CD8-positive, alpha-beta T cell (primary cell): ENCODE measurements at regions of chr22 and their contacts with region 1.

Region 1: DNA sequence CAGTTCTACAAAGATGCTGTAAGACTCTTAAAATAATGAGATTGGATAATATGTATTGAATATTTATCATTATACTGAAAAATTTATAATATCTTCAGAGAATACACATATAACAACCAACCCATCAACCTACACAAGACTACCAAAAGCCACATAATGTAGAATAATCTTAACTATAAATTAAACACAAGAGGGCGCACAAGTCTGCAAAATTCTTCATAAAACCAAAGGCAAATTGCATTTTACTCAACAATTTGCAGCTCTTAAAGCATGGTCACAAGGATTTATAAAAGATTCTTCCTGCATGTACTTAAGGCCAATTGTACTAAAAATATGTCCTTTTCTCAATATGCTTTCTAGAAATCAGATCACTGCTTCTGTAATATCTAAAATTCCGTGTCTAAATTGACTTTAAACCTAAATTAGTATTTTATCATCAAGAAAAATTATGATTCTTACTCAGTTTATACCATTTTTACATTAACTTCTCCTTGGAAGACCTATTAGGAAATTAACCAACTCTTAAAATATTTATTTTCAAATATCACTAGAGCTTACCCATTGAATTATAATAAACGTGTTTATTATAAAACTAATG is 79.0 kb downstream of the TTC28 start:
- DNase-seq: peak in 3 of 9 experiments; percentile 14 to 69 (median 58)
- ATAC-seq: peak; percentile 38
- H3K4me3 ChIP-seq: no peak overlapping the region
- H3K4me3 Mint-ChIP-seq: no peak overlapping the region
- H3K27ac ChIP-seq: no peak overlapping the region
- H3K27ac Mint-ChIP-seq: no peak overlapping the region
- H3K4me1 ChIP-seq: no peaks in the 10 kb centered on the region
- H3K4me1 Mint-ChIP-seq: no peaks in the 10 kb centered on the region
- H3K27me3 ChIP-seq: peaks cover 0 to 2% of the 10 kb centered on the region in 2 experiments
- H3K27me3 Mint-ChIP-seq: peaks cover 24% of the 10 kb centered on the region
- CTCF ChIP-seq: peak; percentile 58

Region 2: DNA sequence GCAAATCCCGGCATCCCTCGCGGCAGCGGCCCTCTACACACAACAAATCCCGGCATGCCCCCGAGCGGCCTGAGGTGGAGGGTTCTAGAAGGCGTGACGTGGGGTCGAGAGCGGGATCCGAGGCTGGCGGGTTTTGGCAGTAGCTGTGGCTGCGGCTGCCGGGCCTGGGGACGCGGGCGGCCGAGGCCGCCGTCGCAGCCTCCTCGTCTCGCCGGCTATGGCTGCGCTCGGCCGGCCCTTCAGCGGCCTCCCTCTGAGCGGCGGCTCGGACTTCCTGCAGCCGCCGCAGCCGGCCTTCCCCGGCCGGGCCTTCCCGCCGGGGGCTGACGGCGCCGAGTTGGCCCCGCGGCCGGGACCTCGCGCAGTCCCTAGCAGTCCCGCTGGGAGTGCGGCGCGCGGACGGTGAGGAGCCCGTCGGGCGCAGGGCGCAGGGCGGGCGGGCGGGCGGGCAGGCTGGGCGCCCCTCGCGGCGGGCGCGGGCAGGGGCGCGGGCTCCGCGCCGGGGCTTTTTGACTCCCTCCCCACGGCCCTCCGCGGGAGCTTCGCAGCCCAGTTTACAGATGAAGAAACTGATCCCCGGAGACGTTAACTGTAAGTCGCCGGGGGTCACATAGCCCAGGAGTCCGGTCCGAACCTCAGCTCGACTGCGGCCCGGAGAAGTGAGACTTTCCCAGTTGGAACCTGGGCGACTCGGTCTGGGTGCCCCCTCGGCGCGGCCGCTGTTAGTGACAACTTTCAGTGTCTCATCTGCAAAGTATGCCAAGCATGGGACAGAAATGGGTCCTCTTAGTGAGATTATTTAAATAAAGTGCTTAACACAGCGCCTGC is 172.2 kb after region 1 on chr22 and contains the start of gene CCDC117:
- CTCF ChIA-PET with region 1: interaction called, 11 read pairs
- POLR2A ChIA-PET with region 1: no interaction called
- intact Hi-C with region 1: loop called in 1 of 2 experiments (anchors 1 kb)
- DNase-seq: peak; percentile 85 to 96 (median 94)
- ATAC-seq: peak; percentile 94
- H3K4me3 ChIP-seq: peak within 1 kb of the TSS; percentile 60 to 65
- H3K4me3 Mint-ChIP-seq: peak within 1 kb of the TSS; percentile 94
- H3K27ac ChIP-seq: peak within 1 kb of the TSS; percentile 68 to 77
- H3K27ac Mint-ChIP-seq: peak within 1 kb of the TSS; percentile 94
- H3K4me1 ChIP-seq: peaks cover 26% of the 10 kb centered on the region
- H3K4me1 Mint-ChIP-seq: peaks cover 30% of the 10 kb centered on the region
- H3K27me3 ChIP-seq: no peaks in the 10 kb centered on the region
- H3K27me3 Mint-ChIP-seq: no peaks in the 10 kb centered on the region
- CTCF ChIP-seq: peak; percentile 31
- total RNA-seq, gene CCDC117: 13.7 to 15.4 TPM

Region 3: GRCh38 chr22:28810821-28811491 is 210.3 kb after region 1 on chr22:
- CTCF ChIA-PET with region 1: interaction called, 18 read pairs
- POLR2A ChIA-PET with region 1: no interaction called
- intact Hi-C with region 1: no loop called
- DNase-seq: peak in 6 of 9 experiments; percentile 31 to 80 (median 52)
- ATAC-seq: peak; percentile 51
- H3K4me3 ChIP-seq: peak overlapping the region; percentile 25 to 46
- H3K4me3 Mint-ChIP-seq: peak overlapping the region; percentile 82
- H3K27ac ChIP-seq: peak overlapping the region; percentile 14 to 64
- H3K27ac Mint-ChIP-seq: peak overlapping the region; percentile 92
- H3K4me1 ChIP-seq: peaks cover 72% of the 10 kb centered on the region
- H3K4me1 Mint-ChIP-seq: peaks cover 76% of the 10 kb centered on the region
- H3K27me3 ChIP-seq: no peaks in the 10 kb centered on the region
- H3K27me3 Mint-ChIP-seq: no peaks in the 10 kb centered on the region
- CTCF ChIP-seq: no peak

Region 4: DNA sequence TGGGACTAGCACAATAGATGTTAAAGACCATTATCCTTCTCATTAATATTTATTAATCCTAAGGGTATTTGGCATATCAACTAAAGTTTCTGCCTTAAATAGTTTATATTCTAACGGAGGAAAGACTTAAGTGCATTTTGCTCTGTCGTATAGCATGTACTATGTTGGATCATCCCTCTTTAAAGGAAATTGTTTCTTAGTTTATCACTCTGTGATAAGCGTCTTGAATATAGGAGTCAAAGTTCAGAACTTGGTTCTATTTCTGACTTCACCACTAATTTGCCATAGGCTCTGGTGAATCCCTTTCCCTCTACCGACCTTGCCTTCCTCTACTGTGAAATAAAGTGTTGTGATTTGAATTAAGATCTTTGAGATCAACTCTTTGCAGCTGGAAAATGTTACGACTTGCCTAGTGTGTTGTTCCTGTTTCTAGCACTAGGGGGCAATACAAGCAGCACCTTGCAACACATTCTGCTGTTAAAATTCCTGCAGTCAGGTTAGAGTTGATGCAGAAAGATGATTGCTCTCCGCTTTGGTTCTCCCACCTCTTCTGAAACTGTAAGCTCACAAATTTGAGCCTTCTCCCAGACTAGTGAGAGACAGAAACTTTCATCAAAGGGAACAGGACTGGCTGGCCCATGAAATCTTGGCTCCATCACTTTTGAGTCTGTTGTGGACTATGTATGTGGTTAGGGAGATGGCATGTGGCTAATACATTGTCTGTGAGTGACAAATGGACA is 254.9 kb after region 1 on chr22:
- CTCF ChIA-PET with region 1: interaction called, 16 read pairs
- POLR2A ChIA-PET with region 1: no interaction called
- intact Hi-C with region 1: loop called (anchors 1 kb)
- DNase-seq: peak; percentile 4 to 76 (median 37)
- ATAC-seq: peak; percentile 59
- H3K4me3 ChIP-seq: no peak overlapping the region
- H3K4me3 Mint-ChIP-seq: no peak overlapping the region
- H3K27ac ChIP-seq: no peak overlapping the region
- H3K27ac Mint-ChIP-seq: no peak overlapping the region
- H3K4me1 ChIP-seq: no peaks in the 10 kb centered on the region
- H3K4me1 Mint-ChIP-seq: no peaks in the 10 kb centered on the region
- H3K27me3 ChIP-seq: no peaks in the 10 kb centered on the region
- H3K27me3 Mint-ChIP-seq: peaks cover 9% of the 10 kb centered on the region
- CTCF ChIP-seq: peak; percentile 94

Region 5: DNA sequence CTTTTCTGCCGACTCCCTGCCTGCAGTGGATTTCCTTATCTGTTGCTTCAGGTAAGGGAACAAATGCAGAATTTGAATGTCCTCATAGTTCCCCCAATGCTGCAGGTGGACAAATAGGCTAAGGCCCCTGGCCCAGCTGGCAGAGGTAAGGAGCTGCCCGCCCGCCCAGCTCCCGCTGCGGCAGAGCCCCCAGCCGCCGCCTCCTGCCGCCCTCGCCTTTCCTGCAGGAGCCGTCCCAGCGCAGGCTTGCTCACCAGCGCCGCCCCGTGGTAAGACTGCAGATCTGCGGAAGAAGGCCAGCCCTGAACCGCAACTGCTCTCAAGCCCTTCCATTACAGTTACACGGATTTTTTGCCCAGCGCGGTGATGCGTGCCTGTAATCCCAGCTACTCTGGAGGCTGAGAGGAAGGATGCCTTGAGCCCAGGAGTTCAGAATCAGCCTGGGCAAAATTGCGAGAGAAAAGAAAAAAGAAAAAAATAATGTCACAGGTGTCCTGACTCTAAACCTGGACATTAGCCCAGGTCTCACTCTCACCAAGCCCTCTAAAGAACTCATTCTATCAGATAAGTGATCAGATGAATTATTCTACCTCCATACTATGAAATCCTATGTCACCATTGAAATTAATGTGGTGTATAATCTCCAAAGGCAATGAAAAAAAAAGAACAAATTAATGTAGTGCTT is 553.9 kb after region 1 on chr22:
- CTCF ChIA-PET with region 1: no interaction called
- POLR2A ChIA-PET with region 1: no interaction called
- intact Hi-C with region 1: loop called in 1 of 2 experiments (anchors 10 kb)
- DNase-seq: peak; percentile 28 to 84 (median 59)
- ATAC-seq: peak; percentile 75
- H3K4me3 ChIP-seq: no peak overlapping the region
- H3K4me3 Mint-ChIP-seq: no peak overlapping the region
- H3K27ac ChIP-seq: no peak overlapping the region
- H3K27ac Mint-ChIP-seq: no peak overlapping the region
- H3K4me1 ChIP-seq: peaks cover 8% of the 10 kb centered on the region
- H3K4me1 Mint-ChIP-seq: peaks cover 9% of the 10 kb centered on the region
- H3K27me3 ChIP-seq: peaks cover 0 to 3% of the 10 kb centered on the region in 2 experiments
- H3K27me3 Mint-ChIP-seq: peaks cover 23% of the 10 kb centered on the region
- CTCF ChIP-seq: peak; percentile 89

Region 6: DNA sequence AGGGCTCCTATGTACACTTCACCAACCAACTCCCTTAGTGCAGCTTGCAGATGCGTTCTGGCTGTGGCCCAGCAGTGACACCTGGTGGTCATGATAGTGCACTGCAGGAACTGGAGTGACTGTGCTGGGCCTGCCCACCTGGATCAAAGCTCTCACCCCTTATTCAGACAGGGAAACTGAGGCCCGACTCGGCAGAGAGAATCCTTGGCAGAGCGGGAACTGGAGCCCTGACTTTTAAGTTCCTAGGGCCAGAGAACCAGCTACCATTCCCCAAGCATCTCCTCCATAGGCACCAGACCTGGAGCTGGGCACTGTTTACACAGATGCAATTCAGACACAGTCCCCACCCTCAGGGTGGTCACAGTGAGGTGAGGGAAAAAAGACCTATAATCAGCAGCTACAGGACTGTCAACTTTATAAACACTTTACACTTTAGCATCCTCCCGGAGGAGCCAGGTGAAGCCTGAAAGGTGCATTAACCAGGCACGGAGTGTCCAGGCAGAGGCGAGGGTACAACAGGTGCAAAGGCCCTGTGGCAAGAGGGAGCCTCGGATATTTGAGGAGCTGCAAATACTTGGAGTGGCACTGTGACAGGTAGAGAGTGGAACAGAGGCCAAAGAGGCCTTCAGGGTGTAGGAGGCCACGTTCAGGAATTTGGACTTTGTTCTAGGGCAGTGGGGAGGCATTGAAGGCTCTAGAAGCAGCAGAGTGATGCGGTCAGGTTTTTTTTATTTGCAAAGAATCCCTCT is 645.2 kb after region 1 on chr22:
- CTCF ChIA-PET with region 1: interaction called, 21 read pairs
- POLR2A ChIA-PET with region 1: no interaction called
- intact Hi-C with region 1: loop called in 1 of 2 experiments (anchors 1 kb)
- DNase-seq: peak; percentile 43 to 79 (median 66)
- ATAC-seq: peak; percentile 91
- H3K4me3 ChIP-seq: no peak overlapping the region
- H3K4me3 Mint-ChIP-seq: no peak overlapping the region
- H3K27ac ChIP-seq: no peak overlapping the region
- H3K27ac Mint-ChIP-seq: no peak overlapping the region
- H3K4me1 ChIP-seq: no peaks in the 10 kb centered on the region
- H3K4me1 Mint-ChIP-seq: no peaks in the 10 kb centered on the region
- H3K27me3 ChIP-seq: no peaks in the 10 kb centered on the region
- H3K27me3 Mint-ChIP-seq: peaks cover 20% of the 10 kb centered on the region
- CTCF ChIP-seq: peak; percentile 90

Region 7: DNA sequence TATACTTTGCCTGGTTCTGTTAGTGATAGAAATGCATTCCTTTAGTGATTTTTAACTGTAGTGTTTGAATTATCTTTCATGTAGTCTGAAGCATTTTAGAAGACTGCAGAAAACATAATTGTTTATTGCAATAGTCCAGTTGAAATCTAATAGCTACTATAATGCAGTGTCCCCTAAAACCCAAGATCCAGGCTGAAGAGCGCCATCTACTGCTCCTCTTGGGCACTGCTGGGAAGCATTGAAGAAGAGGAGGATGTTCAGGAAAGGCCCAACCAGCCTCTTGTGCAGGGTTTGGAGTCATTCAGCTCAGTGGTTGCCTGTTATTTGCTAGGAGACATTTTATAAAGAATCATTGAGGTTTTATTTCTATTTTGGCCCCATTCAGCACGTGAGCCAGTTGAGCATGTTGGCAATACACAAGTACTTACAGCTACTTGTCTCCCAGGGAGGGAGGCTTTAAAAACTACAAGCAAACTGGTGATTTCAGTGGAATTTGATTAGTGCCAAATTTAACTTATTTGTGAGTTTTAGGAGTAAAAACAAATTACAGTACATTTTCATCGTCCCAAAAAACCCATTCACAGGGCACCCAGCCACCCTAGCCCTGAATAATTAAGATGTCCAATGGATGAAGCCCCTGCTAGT is 1404.7 kb after region 1 on chr22:
- CTCF ChIA-PET with region 1: no interaction called
- POLR2A ChIA-PET with region 1: no interaction called
- intact Hi-C with region 1: no loop called
- DNase-seq: peak; percentile 29 to 75 (median 61)
- ATAC-seq: peak; percentile 69
- H3K4me3 ChIP-seq: no peak overlapping the region
- H3K4me3 Mint-ChIP-seq: no peak overlapping the region
- H3K27ac ChIP-seq: no peak overlapping the region
- H3K27ac Mint-ChIP-seq: no peak overlapping the region
- H3K4me1 ChIP-seq: no peaks in the 10 kb centered on the region
- H3K4me1 Mint-ChIP-seq: peaks cover 11% of the 10 kb centered on the region
- H3K27me3 ChIP-seq: no peaks in the 10 kb centered on the region
- H3K27me3 Mint-ChIP-seq: no peaks in the 10 kb centered on the region
- CTCF ChIP-seq: peak; percentile 94